Ovary (tissue), 10 donors: ENCODE measurements at regions of chr1 and their contacts with region 1.

Region 1: GRCh38 chr1:185156854-185157598 is at the starts of genes SWT1 and TRMT1L:
- DNase-seq: peak; percentile 98 to 99 (median 99)
- H3K4me3 ChIP-seq: peak within 1 kb of the TSS; percentile 87
- H3K27ac ChIP-seq: peak within 1 kb of the TSS; percentile 99 to 100
- H3K4me1 ChIP-seq: peaks cover 2% of the 10 kb centered on the region
- H3K27me3 ChIP-seq: no peaks in the 10 kb centered on the region
- CTCF ChIP-seq: no peak
- EP300 ChIP-seq: no peak
- POLR2A ChIP-seq: peak; percentile 99
- total RNA-seq, gene SWT1: 7.8 to 16.6 (median 9.4) TPM
- total RNA-seq, gene TRMT1L: 13.1 to 24.9 (median 20.2) TPM

Region 2: DNA sequence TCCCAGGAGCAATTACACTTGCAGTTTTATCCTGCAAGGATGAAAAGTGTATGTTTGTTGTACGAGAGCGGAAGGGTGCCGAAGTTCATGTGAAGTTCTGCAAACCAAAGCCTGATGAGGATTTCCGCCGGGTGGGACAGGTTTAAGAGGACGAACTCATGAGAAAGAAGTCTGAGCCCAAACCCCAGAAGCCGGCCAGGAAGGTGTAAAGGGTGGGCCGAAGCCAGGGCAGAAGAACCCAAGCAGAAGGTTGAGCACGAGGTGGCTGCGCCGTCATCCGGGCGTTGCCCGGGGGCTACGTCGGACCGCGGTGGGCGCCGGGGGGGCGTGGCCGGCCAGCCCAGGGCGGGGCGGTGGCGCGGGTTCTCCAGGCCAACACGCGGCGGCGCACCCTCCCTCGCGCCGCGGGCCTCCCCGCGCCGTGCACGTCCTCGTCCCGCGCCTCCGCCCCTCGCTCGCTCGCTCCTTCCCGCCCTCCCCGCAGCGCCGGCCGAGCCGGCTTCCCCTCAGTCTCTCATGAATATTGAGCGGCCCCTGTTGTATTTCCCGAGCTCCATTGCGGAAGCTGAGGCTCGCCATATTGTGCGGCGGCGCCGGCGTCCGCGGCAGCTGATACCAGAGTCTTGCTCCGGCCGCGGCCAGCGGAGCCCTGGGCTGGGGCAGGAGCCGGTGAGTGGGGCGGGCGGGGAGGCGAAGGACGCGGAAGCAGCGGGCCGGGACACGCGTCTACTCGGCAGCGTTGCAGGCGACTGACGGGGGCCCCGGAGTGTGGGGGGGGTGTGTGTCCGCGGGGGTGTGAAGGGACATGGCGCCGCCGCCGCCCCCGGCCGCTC is 111.8 kb before region 1 on chr1 and contains the start of gene RNF2:
- intact Hi-C with region 1: loop called in 1 of 4 experiments (anchors 10 kb)
- DNase-seq: peak; percentile 68 to 85 (median 75)
- H3K4me3 ChIP-seq: peak within 1 kb of the TSS; percentile 87
- H3K27ac ChIP-seq: peak within 1 kb of the TSS; percentile 81 to 87
- H3K4me1 ChIP-seq: no peaks in the 10 kb centered on the region
- H3K27me3 ChIP-seq: no peaks in the 10 kb centered on the region
- CTCF ChIP-seq: no peak
- EP300 ChIP-seq: no peak
- POLR2A ChIP-seq: no peak
- total RNA-seq, gene RNF2: 11.0 to 29.6 (median 21.3) TPM

Region 3: GRCh38 chr1:185317034-185317885 is 160.2 kb after region 1 on chr1 and contains the start of gene IVNS1ABP:
- intact Hi-C with region 1: loop called in 1 of 4 experiments (anchors 5 kb)
- DNase-seq: peak; percentile 92 to 95 (median 95)
- H3K4me3 ChIP-seq: peak within 1 kb of the TSS; percentile 90
- H3K27ac ChIP-seq: peak within 1 kb of the TSS; percentile 76 to 92
- H3K4me1 ChIP-seq: peaks cover 2% of the 10 kb centered on the region
- H3K27me3 ChIP-seq: no peaks in the 10 kb centered on the region
- CTCF ChIP-seq: no peak
- EP300 ChIP-seq: no peak
- POLR2A ChIP-seq: peak; percentile 94
- total RNA-seq, gene IVNS1ABP: 31.2 to 73.9 (median 54.2) TPM

Region 4: DNA sequence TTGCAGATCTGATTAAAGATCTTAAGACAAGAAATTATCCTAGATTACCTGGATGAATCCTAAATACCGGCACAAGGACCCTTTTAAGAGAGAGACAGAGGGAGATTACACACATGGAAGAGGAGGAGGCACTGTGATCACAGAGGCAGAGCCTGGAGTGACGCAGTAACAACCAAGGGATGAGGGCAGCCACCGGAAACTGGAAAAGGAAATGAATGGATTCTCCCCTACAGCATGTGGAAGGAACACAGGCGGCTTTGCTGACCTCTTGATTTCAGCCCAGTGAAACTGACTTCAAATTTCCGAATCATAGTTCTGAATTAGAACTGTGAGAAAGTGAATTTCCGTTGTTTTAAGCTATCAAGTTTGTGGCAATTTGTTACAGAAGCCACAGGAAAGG is 210.2 kb after region 1 on chr1:
- intact Hi-C with region 1: no loop called
- DNase-seq: no peak
- H3K4me3 ChIP-seq: no peak overlapping the region
- H3K27ac ChIP-seq: no peak overlapping the region
- H3K4me1 ChIP-seq: no peaks in the 10 kb centered on the region
- H3K27me3 ChIP-seq: no peaks in the 10 kb centered on the region
- CTCF ChIP-seq: no peak
- EP300 ChIP-seq: no peak
- POLR2A ChIP-seq: no peak